Keratinocyte (primary cell): ENCODE measurements at regions of chr9 and their contacts with region 1.

Region 1: DNA sequence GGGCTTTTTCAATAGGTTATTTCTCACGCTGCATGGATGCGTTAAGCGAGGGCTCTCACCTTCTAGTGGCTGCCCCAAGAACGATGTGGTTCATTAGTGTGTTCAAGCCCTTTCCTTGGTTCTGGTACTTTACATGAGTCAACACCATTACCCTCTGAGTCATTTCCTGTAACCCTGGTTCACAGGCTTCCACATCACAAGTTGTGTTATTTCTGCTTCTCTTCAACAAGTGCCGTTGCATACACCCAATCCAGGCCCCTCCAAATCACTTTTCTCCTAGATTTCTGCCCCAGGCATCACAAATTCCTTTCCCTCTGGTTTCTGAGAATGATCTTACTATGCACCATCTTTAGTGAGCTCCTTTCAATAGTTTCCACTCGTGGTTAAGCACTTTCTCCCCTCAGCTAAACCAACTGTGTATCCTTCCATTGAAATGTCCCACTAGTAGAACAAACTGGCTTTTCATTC is 69.5 kb upstream of the RAD23B start:
- DNase-seq: peak; percentile 60
- H3K4me3 ChIP-seq: no peak overlapping the region
- H3K27ac ChIP-seq: no peak overlapping the region
- H3K4me1 ChIP-seq: peaks cover 23% of the 10 kb centered on the region
- H3K27me3 ChIP-seq: no peaks in the 10 kb centered on the region
- CTCF ChIP-seq: no peak

Region 2: GRCh38 chr9:107161319-107161718 is 52.3 kb before region 1 on chr9:
- dilution Hi-C with region 1: no loop called
- DNase-seq: no peak
- H3K4me3 ChIP-seq: no peak overlapping the region
- H3K27ac ChIP-seq: no peak overlapping the region
- H3K4me1 ChIP-seq: no peaks in the 10 kb centered on the region
- H3K27me3 ChIP-seq: peaks cover 4% of the 10 kb centered on the region
- CTCF ChIP-seq: no peak

Region 3: GRCh38 chr9:107309271-107309670 is 95.7 kb after region 1 on chr9:
- dilution Hi-C with region 1: loop called (anchors 25 kb)
- DNase-seq: no peak
- H3K4me3 ChIP-seq: no peak overlapping the region
- H3K27ac ChIP-seq: no peak overlapping the region
- H3K4me1 ChIP-seq: no peaks in the 10 kb centered on the region
- H3K27me3 ChIP-seq: no peaks in the 10 kb centered on the region
- CTCF ChIP-seq: no peak